Activated B cell treated with CpG ODN at 0.5 μM for 24 hours (primary cell): ENCODE measurements at regions of chr20 and their contacts with region 1.

Region 1: GRCh38 chr20:5078399-5078958 is 41.3 kb downstream of the PCNA start:
- DNase-seq: peak; percentile 50
- ATAC-seq: peak; percentile 91
- H3K4me3 Mint-ChIP-seq: peak overlapping the region; percentile 71
- H3K27ac Mint-ChIP-seq: peak overlapping the region; percentile 92
- H3K4me1 Mint-ChIP-seq: peaks cover 55% of the 10 kb centered on the region
- H3K27me3 Mint-ChIP-seq: no peaks in the 10 kb centered on the region
- CTCF ChIP-seq: no peak

Region 2: GRCh38 chr20:4985658-4986057 is 92.8 kb before region 1 on chr20:
- CTCF ChIA-PET with region 1: no interaction called
- POLR2A ChIA-PET with region 1: interaction called, 4 read pairs
- intact Hi-C with region 1: loop called (anchors 1 kb)
- DNase-seq: no peak
- ATAC-seq: peak; percentile 59
- H3K4me3 Mint-ChIP-seq: peak overlapping the region; percentile 66
- H3K27ac Mint-ChIP-seq: peak overlapping the region; percentile 92
- H3K4me1 Mint-ChIP-seq: peaks cover 92% of the 10 kb centered on the region
- H3K27me3 Mint-ChIP-seq: no peaks in the 10 kb centered on the region
- CTCF ChIP-seq: no peak

Region 3: DNA sequence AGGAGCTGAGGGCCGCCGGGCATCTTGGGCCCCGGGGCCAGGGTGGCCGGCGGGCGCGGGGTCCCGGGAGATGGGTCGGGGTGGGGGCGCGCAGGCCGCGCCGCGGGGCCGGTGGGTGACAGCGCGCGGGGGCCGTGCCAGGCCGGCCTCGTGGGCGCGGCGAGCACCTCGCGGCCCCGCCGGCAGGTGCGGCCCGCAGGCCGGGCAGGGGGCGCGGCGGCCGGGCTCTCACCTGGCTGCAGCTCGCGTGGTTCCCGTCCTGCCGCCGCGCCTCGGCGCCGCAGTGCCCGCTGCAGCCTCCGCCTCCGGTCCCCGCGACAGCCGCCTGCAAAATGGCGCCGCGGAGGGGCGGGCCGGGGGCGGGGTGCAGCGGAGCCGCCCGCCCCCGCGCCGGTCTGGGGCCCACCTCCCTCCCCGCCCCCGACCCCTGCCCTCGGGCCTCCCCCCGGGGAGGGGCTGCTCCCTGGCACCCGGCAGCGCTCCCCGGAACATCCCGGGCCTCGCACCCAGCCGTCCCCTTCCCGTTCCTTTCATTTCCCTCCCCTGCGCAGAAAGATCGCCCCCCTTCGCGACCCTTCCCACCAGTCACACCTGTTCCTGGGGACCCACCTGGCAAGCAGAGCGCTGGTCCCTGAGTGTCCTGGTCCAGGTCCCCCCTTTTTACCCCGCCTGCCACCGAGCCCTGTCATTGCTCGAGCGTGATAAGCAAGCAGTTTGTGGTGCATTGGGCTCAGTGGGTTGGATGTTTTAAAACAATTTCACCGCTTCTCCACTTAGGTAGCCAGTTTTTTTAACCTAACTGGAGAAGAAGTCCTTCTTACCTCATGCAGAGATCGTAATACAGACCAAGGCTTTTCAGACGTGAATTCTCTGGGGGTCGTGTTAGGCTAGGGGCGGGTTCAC is 77.1 kb before region 1 on chr20 and contains the start of gene SLC23A2:
- CTCF ChIA-PET with region 1: no interaction called
- POLR2A ChIA-PET with region 1: no interaction called
- intact Hi-C with region 1: loop called (anchors 2 kb)
- DNase-seq: peak; percentile 64
- ATAC-seq: peak; percentile 81
- H3K4me3 Mint-ChIP-seq: peak within 1 kb of the TSS; percentile 98
- H3K27ac Mint-ChIP-seq: peak within 1 kb of the TSS; percentile 92
- H3K4me1 Mint-ChIP-seq: peaks cover 43% of the 10 kb centered on the region
- H3K27me3 Mint-ChIP-seq: no peaks in the 10 kb centered on the region
- CTCF ChIP-seq: no peak
- total RNA-seq, gene SLC23A2: 70.9 and 79.8 TPM in 2 replicates

Region 4: DNA sequence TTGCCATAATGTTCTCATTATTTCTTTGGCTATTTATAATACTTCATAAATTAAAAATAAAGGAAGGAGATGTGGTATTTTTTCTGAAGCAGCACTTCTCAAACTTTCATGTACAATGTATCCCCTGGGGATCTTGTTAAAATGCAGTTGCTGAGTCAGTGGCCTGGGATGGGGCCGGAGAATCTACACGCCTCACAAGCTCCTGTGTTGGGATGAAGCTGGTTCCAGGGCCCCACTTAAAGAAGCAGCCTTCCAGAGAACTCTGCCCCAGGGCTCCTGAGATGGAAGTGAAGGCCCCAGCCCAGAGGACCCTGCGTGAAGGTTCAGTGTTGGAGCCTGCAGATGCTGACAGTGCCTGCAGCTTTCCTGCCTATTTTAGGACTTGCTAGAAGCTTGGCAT is 37.0 kb before region 1 on chr20:
- CTCF ChIA-PET with region 1: interaction called, 3 read pairs
- POLR2A ChIA-PET with region 1: interaction called, 11 read pairs
- intact Hi-C with region 1: loop called (anchors 2 kb)
- DNase-seq: no peak
- ATAC-seq: peak; percentile 34
- H3K4me3 Mint-ChIP-seq: no peak overlapping the region
- H3K27ac Mint-ChIP-seq: no peak overlapping the region
- H3K4me1 Mint-ChIP-seq: peaks cover 26% of the 10 kb centered on the region
- H3K27me3 Mint-ChIP-seq: no peaks in the 10 kb centered on the region
- CTCF ChIP-seq: no peak

Region 5: GRCh38 chr20:5046656-5047339 is 31.7 kb before region 1 on chr20:
- CTCF ChIA-PET with region 1: interaction called, 3 read pairs
- POLR2A ChIA-PET with region 1: interaction called, 11 read pairs
- intact Hi-C with region 1: loop called (anchors 2 kb)
- DNase-seq: no peak
- ATAC-seq: peak; percentile 95
- H3K4me3 Mint-ChIP-seq: peak overlapping the region; percentile 3
- H3K27ac Mint-ChIP-seq: peak overlapping the region; percentile 53
- H3K4me1 Mint-ChIP-seq: peaks cover 30% of the 10 kb centered on the region
- H3K27me3 Mint-ChIP-seq: no peaks in the 10 kb centered on the region
- CTCF ChIP-seq: no peak

Region 6: DNA sequence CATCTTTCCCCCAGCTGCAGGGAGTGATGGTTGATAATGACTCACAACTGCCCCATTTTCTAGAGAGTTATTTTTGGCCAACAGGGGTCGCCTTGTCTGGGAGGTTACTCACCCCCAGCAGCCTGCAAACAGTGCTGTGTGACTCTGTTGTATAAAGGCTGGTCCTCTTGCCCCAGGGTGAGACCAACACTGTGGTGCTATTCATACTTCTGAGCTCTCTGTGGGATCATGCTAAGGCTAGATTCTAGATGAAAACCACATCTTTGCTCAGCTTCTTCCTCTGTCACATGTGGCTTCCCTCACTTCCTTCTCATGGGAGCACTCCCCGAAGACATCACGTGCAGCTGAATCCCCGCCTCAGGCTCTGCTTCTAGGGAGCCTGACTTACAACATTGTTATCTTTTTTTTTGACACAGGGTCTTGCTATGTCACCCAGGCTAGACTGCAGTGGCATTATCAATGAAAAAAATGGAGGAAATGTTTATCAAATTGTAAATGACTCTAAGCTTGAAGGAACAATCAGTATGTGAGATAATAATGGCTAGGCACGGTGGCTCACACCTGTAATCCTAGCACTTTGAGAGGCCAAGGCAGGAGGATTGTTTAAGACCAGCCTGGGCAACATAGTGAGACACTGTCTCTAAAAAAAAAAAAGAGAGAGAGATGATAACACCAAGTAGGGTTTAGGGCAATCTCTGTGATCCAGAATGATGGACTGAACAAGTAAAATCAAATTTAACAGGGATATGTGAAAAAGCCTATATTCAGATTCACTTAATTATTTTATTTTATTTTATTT is 21.5 kb before region 1 on chr20:
- CTCF ChIA-PET with region 1: interaction called, 8 read pairs
- POLR2A ChIA-PET with region 1: interaction called, 3 read pairs
- intact Hi-C with region 1: loop called (anchors 1 kb)
- DNase-seq: peak; percentile 20
- ATAC-seq: peak; percentile 92
- H3K4me3 Mint-ChIP-seq: no peak overlapping the region
- H3K27ac Mint-ChIP-seq: peak overlapping the region; percentile 73
- H3K4me1 Mint-ChIP-seq: peaks cover 16% of the 10 kb centered on the region
- H3K27me3 Mint-ChIP-seq: no peaks in the 10 kb centered on the region
- CTCF ChIP-seq: no peak

Region 7: DNA sequence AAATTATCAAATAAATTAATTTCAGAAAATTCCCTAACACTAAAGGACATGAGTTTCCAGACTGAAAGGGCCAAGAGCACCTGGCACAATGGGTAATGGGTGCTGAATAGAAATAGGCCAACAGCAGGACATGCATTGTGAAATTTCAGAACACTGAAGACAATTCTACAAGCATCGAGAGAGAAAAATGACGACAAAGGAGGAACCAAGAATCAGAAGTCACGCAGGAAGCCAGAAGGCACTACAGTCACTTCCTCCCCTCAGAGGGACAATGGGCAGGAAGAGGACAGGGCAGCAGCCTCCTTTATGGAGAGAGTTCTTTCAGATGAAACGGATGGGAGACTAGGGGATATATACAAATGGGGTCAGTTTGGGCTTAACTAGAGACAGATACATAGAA is 11.7 kb after region 1 on chr20:
- CTCF ChIA-PET with region 1: interaction called, 4 read pairs
- POLR2A ChIA-PET with region 1: interaction called, 14 read pairs
- intact Hi-C with region 1: loop called (anchors 1 kb)
- DNase-seq: no peak
- ATAC-seq: peak; percentile 83
- H3K4me3 Mint-ChIP-seq: peak overlapping the region; percentile 42
- H3K27ac Mint-ChIP-seq: peak overlapping the region; percentile 85
- H3K4me1 Mint-ChIP-seq: peaks cover 38% of the 10 kb centered on the region
- H3K27me3 Mint-ChIP-seq: no peaks in the 10 kb centered on the region
- CTCF ChIP-seq: no peak